ENCODE measurements at regions of chr17 and their contacts with region 1.

Region 1: DNA sequence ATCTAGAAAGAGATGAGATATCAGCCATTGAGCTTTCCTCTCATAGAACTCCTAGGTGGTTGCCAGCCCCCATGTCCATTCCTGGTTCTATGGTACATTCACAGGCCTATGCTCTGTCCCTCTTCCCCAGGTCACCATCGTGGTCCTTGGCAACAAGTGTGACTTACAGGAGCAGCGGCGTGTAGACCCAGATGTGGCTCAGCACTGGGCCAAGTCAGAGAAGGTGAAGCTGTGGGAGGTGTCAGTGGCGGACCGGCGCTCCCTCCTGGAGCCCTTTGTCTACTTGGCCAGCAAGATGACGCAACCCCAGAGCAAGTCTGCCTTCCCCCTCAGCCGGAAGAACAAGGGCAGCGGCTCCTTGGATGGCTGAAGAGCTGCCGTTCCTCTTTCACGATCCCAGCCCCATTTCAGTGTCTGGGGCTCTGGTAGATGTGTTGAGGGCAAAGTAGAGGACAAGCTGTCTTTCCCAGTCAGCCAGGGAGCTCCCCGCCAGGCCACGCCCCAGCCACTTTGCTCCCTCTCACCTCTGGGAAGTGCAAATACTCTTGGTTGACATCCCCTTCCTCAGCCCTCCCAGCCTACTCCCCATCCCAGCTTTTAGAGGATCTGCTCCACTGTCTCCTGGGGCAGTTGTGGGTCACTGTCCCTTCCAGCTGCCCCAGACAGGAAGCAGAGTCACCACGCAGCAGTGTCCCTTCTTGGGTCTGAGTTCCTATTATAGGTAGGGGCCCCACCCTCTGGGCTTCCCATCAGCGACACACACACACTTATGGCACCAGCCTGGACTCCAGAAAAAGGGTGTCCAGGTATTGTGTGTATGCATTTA is 3.8 kb downstream of the NKIRAS2 start:
- DNase-seq: no peak
- H3K27ac ChIP-seq: peak overlapping the region; percentile 64
- CTCF ChIP-seq: no peak

Region 2: DNA sequence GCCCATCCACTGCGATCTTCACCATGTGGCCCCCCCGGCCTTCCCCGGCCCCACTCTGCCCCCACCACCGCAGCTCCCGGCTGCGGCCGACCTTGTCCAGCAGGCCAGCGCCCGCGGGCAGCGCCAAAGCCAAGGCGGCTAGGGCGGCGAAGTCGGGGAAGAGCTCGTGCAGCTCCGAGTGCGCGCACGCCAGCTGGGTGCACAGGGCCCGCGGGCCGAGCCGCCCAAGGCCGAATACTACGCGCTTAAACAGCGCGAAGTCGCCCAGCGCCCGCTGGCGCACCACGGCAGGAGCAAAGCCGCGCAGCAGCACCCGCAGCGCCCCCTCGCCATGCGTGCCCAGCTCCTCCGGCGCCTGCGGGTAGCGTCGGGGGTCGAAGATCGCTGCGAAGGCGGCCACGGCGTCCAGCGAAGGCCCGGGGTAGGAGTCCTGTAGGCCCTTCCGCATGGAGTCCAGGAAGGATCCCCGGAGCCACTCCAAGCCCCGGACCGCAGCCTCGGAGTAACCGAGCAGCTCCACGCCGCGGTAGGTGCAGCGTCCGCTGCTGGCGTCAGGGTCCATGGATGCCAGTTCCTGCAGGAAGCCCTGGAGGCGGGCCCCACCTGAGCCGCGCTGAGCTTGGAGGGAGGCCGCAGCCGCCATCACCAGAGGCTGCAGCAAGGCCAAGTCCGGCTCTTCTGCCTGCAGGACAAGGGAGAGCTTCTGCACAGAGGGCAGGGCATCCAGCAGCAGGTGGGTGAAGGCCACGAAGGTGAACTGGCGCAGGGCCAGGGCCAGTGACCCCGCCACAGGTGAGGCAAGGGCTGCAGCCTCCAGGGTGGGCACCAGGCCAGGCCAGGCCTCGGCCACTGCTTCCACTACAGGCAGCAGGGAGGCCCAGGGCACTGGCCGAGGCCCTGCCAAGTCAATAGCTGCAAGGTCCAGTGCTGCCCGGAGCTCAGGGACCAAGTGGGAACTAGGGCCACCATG is 16.3 kb after region 1 on chr17:
- CTCF ChIA-PET with region 1: interaction called, 7 read pairs
- POLR2A ChIA-PET with region 1: interaction called, 12 read pairs
- DNase-seq: no peak
- H3K27ac ChIP-seq: no peak overlapping the region
- CTCF ChIP-seq: no peak

Region 3: DNA sequence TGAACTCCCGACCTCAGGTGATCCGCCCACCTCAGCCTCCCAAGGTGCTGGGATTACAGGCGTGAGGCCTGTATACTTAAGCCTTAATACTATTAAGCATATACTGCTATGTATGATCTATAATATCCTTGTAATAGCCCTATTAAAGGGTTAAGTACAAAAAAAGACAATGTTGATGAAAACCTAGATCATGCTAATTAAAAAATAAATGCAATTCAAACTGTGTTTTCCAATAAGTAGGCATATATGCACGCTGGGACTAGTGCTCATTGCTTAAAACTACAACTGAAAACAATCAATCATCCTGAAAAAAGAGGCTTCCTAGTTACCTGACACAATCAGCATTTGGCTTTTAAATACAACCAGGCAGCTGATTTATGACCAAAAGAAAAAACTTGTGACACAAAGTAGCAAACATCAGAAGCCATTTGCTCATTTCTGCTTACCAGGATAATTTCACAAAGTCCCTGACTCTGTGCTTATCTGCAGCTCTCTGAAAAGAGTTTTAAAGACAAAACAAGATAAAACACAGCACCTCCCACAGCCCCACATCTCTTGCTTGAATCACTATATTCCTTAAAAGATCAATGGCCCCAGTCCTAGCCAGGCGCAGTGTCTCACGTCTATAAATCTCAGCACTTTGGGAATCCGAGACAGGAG is 63.4 kb after region 1 on chr17:
- CTCF ChIA-PET with region 1: no interaction called
- POLR2A ChIA-PET with region 1: no interaction called
- DNase-seq: no peak
- H3K27ac ChIP-seq: no peak overlapping the region
- CTCF ChIP-seq: no peak

Region 4: DNA sequence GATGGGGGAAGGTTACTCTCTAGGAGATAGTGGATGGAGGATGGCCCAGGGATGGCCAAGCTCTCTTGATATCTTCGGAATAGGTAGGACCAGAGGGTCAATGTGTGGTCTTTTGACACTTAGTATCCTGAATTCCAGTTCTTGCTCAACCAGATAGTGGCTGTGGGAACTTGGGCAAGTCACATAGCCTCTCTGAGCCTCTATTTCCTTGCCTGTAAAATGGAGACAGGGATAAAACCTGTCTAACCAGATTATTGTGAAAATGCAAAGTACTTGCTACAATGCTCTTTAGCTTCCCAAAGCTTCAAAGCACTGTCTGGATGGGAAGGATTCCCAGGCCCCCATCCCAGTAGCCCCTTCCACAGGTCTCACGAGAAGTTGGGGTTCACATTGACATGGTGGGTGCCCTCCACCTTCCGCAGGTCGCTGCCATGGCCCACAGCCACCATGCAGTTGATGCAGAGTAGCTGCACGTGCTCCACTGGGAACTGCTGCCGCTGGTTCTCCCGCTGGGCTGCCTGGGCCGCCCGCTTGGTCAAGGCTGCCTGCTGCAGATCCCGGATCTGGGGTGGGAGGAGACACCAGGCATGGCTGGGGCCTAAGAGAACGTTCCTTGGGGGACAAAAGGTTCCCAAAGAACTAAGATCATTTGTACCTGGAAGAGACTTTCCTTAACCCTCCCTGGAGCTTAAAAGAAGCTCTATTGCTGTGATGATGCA is 79.7 kb after region 1 on chr17:
- CTCF ChIA-PET with region 1: interaction called, 10 read pairs
- POLR2A ChIA-PET with region 1: no interaction called
- DNase-seq: no peak
- H3K27ac ChIP-seq: no peak overlapping the region
- CTCF ChIP-seq: no peak

Region 5: DNA sequence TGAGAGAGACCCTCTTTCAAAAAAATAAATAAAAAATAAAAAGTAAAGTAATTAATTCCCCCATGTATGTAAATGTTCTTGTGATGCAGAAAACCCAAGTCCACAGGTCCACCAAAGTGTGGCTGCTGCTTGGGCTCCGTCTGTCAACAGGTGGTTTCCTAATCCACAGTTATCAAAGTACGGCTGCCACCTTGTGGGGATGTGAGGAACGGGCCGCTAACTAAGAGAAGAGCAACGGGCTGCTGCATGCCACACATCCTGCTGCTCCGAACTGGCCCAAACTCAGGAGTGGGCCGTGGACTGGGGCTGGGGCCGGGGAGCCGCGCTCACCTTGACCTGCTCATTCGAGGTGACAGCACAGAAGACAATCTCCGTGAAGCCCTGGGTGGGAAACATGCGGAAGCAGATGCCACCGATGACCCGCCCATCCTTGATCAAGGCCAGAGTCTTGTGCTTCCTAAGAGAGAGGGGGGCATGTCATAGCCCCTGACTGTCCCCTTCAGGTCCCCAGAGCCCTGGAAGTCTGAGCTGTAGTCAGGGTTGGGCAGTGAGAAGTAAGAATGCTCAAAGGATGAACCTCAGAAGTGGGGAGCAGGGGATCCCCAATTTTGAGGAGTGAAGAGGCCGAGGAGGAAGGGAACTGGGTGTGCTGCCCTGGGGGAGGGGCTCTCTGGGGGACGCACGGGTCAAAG is 93.1 kb after region 1 on chr17:
- CTCF ChIA-PET with region 1: interaction called, 19 read pairs
- POLR2A ChIA-PET with region 1: interaction called, 4 read pairs
- DNase-seq: peak; percentile 64
- H3K27ac ChIP-seq: peak overlapping the region; percentile 27; the same call in 1 of the 2 replicates
- CTCF ChIP-seq: peak; percentile 86

Measured in RWPE1 (cell line).